K562 (cell line): ENCODE measurements at regions of chr1 and their contacts with region 1.

Region 1: DNA sequence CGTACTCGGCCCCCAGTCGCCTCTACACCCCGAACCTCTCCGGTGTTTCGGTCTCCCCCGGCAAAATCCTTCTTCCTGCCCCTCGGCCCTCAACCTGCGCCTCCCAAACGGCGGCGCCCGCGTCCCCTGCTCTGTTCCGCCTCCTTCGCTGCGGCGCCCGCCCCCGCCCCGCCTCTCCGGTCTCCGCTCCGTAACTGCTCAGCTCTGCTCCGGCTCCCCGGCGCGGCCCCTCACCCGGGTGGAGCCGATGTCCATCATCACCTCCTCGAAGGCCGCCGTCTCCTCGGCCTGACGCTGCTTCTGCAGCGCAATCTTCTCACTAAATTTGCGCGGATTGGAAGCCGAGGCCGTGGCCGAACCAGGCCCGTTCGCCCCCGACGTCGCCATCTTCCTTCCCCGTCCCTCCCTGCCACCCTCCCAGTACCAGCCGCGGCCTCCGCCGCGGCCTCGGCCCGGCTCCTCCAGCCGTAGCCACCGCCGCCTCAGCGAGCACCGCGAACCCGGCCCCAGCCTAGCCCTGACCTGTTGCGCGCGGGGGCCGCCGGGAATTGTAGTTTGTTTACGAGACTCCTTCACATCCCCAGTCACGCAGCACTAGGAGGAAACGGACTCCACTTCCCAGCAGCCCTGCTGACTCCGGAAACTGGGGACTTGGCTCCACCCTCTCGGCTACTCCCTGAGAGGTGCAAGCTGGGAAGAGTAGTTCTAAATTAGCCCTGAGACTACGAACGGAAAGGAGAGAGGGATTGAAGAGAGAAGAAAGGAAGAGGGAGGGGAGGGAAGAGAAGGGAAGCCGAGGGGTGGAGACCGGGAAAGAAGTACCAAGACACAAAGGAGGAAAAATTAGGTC is at the start of gene CRTC2:
- DNase-seq: peak; percentile 89 to 98 (median 94)
- ATAC-seq: peak; percentile 87
- H3K4me3 ChIP-seq: peak within 1 kb of the TSS; percentile 94
- H3K27ac ChIP-seq: peak within 1 kb of the TSS; percentile 83
- H3K4me1 ChIP-seq: peaks cover 27 to 33% of the 10 kb centered on the region in 2 experiments
- H3K27me3 ChIP-seq: no peaks in the 10 kb centered on the region
- CTCF ChIP-seq: peak in 1 of 3 experiments; percentile 8; a peak in 1 of 6 replicates
- EP300 ChIP-seq: no peak
- POLR2A ChIP-seq: peak; percentile 74
- RAD21 ChIP-seq: 0 out of 4 replicates have a peak, but pooled peaks of 1 of the 2 experiments have one; percentile 8
- polyA plus RNA-seq, gene CRTC2: 2.7 to 3.3 TPM

Region 2: DNA sequence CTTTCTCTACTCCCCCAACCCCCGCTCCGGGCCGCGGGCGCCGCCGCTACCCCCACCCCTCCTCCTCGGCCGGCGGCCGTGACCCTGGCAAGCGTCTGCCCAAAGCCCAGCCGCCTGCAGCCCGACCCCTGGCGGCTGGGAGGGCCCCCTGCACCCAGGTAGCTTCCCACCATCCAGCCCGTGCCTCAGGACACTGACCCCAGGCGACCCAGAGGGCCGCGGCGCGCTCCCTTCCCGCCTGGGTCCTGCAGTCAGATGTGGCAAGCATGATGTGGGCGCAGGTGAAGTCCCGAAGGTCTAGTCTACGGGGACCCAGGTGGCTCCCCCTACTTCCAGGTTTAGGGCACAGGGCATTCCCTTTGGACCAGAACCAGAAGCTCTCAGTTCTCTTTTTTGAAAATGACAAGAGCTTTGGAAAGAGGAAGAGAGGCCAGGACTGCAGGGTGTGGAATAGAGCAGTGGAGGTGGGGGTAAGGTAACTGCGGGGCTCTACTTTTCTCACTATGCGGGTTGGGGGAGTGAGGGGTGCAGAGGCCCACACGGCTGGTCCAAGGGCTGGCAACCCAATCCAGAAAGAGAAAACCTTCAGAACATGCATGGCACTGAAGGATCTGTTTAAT is 11.6 kb before region 1 on chr1 and contains the start of gene DENND4B:
- CTCF ChIA-PET with region 1: interaction called, 3 read pairs
- POLR2A ChIA-PET with region 1: interaction called, 39 read pairs
- in situ Hi-C with region 1: no loop called
- intact Hi-C with region 1: no loop called
- DNase-seq: peak; percentile 92 to 96 (median 95)
- ATAC-seq: peak; percentile 94
- H3K4me3 ChIP-seq: peak within 1 kb of the TSS; percentile 99
- H3K27ac ChIP-seq: peak within 1 kb of the TSS; percentile 85
- H3K4me1 ChIP-seq: peaks cover 12 to 32% of the 10 kb centered on the region in 2 experiments; a peak in 4 of 5 replicates
- H3K27me3 ChIP-seq: no peaks in the 10 kb centered on the region
- CTCF ChIP-seq: peak; percentile 82 to 94 (median 89)
- EP300 ChIP-seq: 0 out of 2 replicates have a peak, but pooled peaks have one; percentile 13
- POLR2A ChIP-seq: peak; percentile 41; the same call in 1 of the 2 replicates
- RAD21 ChIP-seq: peak; percentile 44 to 57; a peak in 3 of 4 replicates
- polyA plus RNA-seq, gene DENND4B: 9.5 to 13.4 TPM

Region 3: DNA sequence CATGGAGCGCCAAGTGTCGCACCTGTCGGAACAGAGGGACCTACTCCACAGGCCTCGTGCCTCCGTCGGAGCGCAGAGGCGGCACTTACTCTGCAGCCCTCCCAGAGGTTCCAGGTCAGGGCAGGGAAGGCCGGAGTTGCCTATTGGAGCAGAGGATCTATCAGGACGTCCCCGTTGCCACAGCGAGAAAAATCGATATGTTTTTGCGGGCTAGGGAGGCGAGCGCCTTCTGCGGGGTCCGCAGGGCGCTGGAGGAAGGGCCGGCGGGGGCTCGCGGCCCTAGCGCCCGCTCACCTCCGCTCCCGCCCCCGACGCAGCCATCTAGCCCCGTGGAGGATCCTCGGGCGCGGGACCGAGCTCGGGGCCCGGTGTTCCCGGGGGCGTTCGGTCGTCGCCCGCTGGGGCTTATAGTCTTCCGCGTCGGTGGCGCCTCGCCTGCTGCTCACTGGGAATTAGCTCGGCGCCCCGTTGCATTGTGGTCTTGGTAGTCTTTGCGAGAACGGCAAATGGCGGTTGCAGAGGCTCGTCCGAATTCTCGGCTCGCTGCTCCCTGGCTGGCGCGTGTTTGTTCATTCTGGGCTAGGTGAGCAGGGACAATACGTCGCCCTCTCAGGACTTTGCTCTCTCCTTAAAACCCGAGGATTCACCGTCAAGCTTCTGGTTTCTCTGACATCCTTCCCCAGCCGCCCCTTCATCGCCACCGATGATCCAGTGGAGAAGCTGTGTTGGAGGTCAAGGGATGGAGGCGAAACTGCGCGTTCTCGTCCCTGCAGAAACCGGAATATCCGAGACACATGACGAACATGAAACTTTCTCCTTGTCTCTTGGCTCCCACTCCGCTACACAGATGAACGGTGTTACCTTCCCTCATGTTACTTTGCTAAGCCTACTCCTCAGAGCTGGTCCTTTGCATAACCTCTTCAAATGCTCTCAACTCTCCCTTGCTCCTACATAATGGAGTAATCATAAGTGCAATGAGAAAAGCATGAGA is 19.2 kb after region 1 on chr1 and contains the start of gene JTB:
- CTCF ChIA-PET with region 1: no interaction called
- POLR2A ChIA-PET with region 1: interaction called, 37 read pairs
- in situ Hi-C with region 1: no loop called
- intact Hi-C with region 1: no loop called
- DNase-seq: peak; percentile 83 to 93 (median 84)
- ATAC-seq: peak; percentile 90
- H3K4me3 ChIP-seq: peak within 1 kb of the TSS; percentile 84
- H3K27ac ChIP-seq: peak within 1 kb of the TSS; percentile 91
- H3K4me1 ChIP-seq: peaks cover 13 to 17% of the 10 kb centered on the region in 2 experiments; a peak in 4 of 5 replicates
- H3K27me3 ChIP-seq: no peaks in the 10 kb centered on the region
- CTCF ChIP-seq: 0 out of 6 replicates have a peak, but pooled peaks of 1 of the 3 experiments have one; percentile 4
- EP300 ChIP-seq: peak; percentile 22; the same call in 1 of the 2 replicates
- POLR2A ChIP-seq: peak; percentile 83
- RAD21 ChIP-seq: 0 out of 4 replicates have a peak, but pooled peaks of 1 of the 2 experiments have one; percentile 2
- polyA plus RNA-seq, gene JTB: 24.7 to 36.7 TPM